Spleen (tissue), 13 donors: ENCODE measurements at regions of chr3 and their contacts with region 1.

Region 1: DNA sequence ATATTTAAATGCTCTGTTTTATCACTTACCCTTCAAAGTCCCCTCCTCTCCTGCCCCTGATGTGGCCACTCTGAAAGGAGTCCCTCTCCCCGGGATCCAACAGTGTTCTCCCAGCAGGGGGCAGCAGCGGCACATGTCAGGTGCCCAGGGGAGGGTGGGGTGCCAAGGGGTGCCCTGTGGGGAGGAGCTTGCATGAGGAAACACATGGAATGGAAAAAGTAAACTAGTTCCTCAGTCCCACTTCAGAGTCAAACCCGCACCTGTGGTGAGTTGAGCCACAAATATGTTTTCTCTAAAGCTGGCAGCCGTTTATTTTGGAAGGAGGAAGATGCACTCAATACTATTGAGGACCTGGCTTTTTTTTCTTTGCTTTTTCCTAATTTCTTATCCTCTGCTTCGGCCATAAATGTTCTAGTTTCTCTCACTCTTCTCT is 30.1 kb upstream of the NRROS start:
- DNase-seq: peak; percentile 98
- H3K4me3 ChIP-seq: peak overlapping the region in 2 of 8 donors; percentile 6 to 20
- H3K27ac ChIP-seq: peak overlapping the region in 7 of 8 donors; percentile 25 to 85 (median 75)
- H3K4me1 ChIP-seq: peaks cover 18 to 46% (median 29%) of the 10 kb centered on the region in 6 donors
- H3K27me3 ChIP-seq: no peaks in the 10 kb centered on the region
- CTCF ChIP-seq: peak; percentile 74 to 94 (median 91)
- POLR2A ChIP-seq: no peak

Region 2: DNA sequence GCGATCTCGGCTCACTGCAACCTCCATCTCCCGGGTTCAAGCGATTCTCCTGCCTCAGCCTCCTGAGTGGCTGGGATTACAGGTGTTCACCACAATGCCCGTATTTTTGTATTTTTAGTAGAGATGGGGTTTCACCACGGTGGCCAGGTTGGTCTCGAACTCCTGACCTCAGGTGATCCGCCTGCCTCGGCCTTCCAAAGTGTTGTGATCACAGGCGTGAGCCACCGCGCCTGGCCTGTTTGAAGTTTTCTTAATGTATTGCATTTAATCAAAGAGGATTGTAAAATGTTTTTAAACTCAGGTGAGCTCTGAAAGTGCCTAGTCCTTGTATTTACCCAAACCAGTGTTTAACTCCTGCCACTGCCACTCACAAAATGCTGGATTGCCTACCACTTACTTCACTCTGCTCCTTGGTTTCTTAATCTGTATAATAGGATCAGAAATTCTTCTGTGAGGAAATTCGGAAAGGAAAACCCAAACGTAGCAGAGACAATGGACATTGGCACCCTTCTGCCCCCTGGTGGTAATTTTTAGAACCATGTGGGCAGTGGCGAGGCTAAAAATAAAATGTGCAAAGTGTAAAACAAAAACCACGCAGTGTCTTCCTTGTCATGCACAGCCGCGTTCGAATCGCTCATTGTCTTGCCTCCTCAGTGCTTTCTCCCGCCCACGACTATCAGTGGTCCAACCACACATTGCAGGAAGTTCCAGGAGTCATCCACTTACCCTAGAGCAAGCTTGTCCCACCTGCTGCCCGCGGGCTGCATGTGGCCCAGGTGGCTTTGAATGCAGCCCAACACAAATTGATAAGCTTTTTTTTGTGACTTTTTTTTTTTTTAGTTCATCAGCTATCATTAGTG is 75.4 kb after region 1 on chr3:
- intact Hi-C with region 1: loop called (anchors 2 kb)
- DNase-seq: peak; percentile 82
- H3K4me3 ChIP-seq: peak overlapping the region in 1 of 8 donors; percentile 45
- H3K27ac ChIP-seq: peak overlapping the region in 7 of 8 donors; percentile 22 to 74 (median 53)
- H3K4me1 ChIP-seq: peaks cover 0 to 53% (median 28%) of the 10 kb centered on the region in 6 donors
- H3K27me3 ChIP-seq: no peaks in the 10 kb centered on the region
- CTCF ChIP-seq: peak; percentile 83 to 97 (median 93)
- POLR2A ChIP-seq: no peak